ENCODE measurements at regions of chr18 and their contacts with region 1.

Region 1: GRCh38 chr18:21826196-21826595 is 85.6 kb downstream of the MIB1 start:
- DNase-seq: no peak
- ATAC-seq: peak; percentile 67 to 82
- H3K4me3 ChIP-seq: peak overlapping the region in 3 of 4 donors; percentile 19 to 61 (median 34)
- H3K27ac ChIP-seq: peak overlapping the region; percentile 80 to 89 (median 88)
- H3K4me1 ChIP-seq: peaks cover 16 to 32% of the 10 kb centered on the region in 2 donors
- H3K27me3 ChIP-seq: no peaks in the 10 kb centered on the region
- CTCF ChIP-seq: no peak
- POLR2A ChIP-seq: no peak

Region 2: DNA sequence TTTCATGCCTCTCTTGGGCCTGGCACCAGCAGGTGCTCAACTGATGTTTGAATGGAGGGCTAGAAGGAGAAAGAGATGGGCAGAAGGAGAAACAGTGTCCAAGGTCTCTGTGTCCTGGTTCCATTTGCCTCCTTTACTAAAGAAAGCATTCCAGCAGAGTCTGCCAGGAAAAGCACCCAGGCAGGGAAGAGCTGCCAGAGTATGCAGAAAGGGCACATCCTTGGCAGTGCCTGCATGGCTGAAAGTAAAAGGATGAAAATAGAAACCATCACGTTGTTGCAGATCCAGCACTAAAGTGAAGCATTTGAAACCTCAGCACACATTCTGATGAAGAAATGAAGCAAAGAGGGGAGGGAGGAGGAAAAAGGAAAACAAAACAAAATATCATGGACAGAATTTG is 367.9 kb before region 1 on chr18:
- in situ Hi-C with region 1: no loop called
- intact Hi-C with region 1: loop called (anchors 5 kb)
- DNase-seq: peak; percentile 85 to 94
- ATAC-seq: peak; percentile 64
- H3K4me3 ChIP-seq: peak overlapping the region; percentile 11 to 37 (median 32)
- H3K27ac ChIP-seq: peak overlapping the region; percentile 90 to 96 (median 92)
- H3K4me1 ChIP-seq: peaks cover 58 to 61% of the 10 kb centered on the region in 2 donors
- H3K27me3 ChIP-seq: no peaks in the 10 kb centered on the region
- CTCF ChIP-seq: no peak
- POLR2A ChIP-seq: peak in 1 of 2 donors; percentile 63

Region 3: DNA sequence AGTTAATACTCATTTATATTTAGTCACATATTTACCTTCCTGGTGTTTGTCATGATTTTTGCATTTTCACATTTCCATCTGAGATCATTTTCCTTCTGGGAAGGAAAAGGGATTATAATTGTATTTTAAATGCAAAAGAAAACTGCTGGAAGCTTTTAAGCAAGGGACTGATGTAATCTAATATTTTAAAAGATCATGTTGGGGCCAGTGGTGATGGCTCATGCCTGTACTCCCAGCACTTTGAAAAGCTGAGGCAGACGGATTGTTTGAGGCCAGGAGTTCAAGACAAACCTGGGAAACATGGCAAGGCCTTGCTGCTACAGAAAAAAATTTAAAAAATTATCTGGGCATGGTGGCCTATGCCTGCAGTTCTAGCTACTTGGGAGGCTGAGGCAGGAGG is 63.4 kb after region 1 on chr18:
- in situ Hi-C with region 1: no loop called
- intact Hi-C with region 1: no loop called
- DNase-seq: no peak
- ATAC-seq: no peak
- H3K4me3 ChIP-seq: no peak overlapping the region
- H3K27ac ChIP-seq: no peak overlapping the region
- H3K4me1 ChIP-seq: no peaks in the 10 kb centered on the region
- H3K27me3 ChIP-seq: no peaks in the 10 kb centered on the region
- CTCF ChIP-seq: no peak
- POLR2A ChIP-seq: no peak